ENCODE measurements at regions of chr6 and their contacts with region 1.

Region 1: GRCh38 chr6:53171605-53172446 is 23.2 kb upstream of the GCM1 start:
- DNase-seq: peak; percentile 80
- H3K4me3 ChIP-seq: peak overlapping the region in 1 of 2 experiments; percentile 50; a peak in 1 of 4 replicates
- H3K27ac ChIP-seq: no peak overlapping the region
- H3K4me1 ChIP-seq: no peaks in the 10 kb centered on the region; a peak in 1 of 4 replicates
- H3K27me3 ChIP-seq: no peaks in the 10 kb centered on the region
- CTCF ChIP-seq: peak; percentile 100
- EP300 ChIP-seq: no peak
- RAD21 ChIP-seq: peak; percentile 100

Region 2: GRCh38 chr6:52964318-52964717 is 207.5 kb before region 1 on chr6:
- CTCF ChIA-PET with region 1: no interaction called
- POLR2A ChIA-PET with region 1: no interaction called
- DNase-seq: no peak
- H3K4me3 ChIP-seq: no peak overlapping the region
- H3K27ac ChIP-seq: no peak overlapping the region
- H3K4me1 ChIP-seq: no peaks in the 10 kb centered on the region
- H3K27me3 ChIP-seq: no peaks in the 10 kb centered on the region
- CTCF ChIP-seq: no peak
- EP300 ChIP-seq: no peak
- RAD21 ChIP-seq: no peak

Region 3: DNA sequence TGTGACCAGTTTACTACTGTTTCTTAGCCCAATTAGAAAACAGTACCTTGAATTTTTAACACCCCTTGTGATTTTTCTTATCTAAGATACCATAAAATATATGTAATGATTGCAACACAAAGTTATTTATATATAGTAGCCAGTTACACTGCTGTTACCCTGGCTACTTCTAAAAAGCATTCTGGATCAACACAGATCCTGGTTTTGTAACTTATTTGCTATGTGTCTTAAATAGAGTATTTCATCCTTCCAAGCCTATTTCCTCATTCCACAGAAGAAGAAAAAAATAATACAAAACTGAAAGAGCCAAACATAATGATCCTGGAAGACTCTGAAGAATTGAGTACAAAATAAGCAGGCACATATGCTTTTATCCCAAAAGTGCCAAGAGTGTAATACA is 157.8 kb before region 1 on chr6:
- CTCF ChIA-PET with region 1: no interaction called
- POLR2A ChIA-PET with region 1: no interaction called
- DNase-seq: no peak
- H3K4me3 ChIP-seq: no peak overlapping the region
- H3K27ac ChIP-seq: no peak overlapping the region; a peak in 1 of 4 replicates
- H3K4me1 ChIP-seq: no peaks in the 10 kb centered on the region
- H3K27me3 ChIP-seq: no peaks in the 10 kb centered on the region
- CTCF ChIP-seq: no peak
- EP300 ChIP-seq: no peak
- RAD21 ChIP-seq: no peak

Region 4: DNA sequence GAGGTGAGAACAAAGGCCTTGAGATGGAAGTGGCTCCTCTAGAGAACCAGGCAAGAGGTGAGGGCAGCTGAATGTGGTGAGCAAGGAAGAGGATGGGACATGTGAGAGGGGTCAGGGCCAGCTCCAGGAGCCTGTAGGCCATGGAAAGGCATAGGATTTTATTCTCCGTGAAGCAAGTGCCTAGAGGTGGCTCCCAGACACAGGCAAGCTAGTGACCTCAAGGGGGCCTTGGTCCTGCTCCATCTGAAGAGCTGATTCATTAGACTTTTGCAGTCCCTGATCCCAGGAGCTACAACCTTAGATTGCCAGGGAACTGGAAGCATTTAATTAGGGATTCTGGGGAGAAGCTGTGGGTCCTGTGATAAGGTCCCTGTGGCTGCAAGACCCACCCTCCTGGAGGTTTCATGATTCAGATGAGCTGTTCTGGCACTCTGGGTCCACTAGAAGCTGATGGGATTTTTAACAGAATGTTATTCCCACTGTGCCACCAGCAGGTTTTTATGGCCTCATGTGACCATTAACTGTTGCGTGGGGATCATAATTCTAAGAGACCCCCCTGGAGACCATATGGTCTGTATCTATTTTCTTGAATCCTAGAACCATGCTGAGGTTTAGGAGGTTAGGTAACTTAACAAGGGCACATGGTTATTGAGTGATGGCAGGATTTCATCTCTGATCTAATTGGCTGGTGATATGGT is 86.4 kb after region 1 on chr6:
- CTCF ChIA-PET with region 1: interaction called, 13 read pairs
- POLR2A ChIA-PET with region 1: no interaction called
- DNase-seq: no peak
- H3K4me3 ChIP-seq: no peak overlapping the region
- H3K27ac ChIP-seq: no peak overlapping the region; a peak in 1 of 4 replicates
- H3K4me1 ChIP-seq: peaks cover 0 to 3% of the 10 kb centered on the region in 2 experiments; a peak in 1 of 4 replicates
- H3K27me3 ChIP-seq: no peaks in the 10 kb centered on the region
- CTCF ChIP-seq: no peak
- EP300 ChIP-seq: no peak
- RAD21 ChIP-seq: no peak

Region 5: DNA sequence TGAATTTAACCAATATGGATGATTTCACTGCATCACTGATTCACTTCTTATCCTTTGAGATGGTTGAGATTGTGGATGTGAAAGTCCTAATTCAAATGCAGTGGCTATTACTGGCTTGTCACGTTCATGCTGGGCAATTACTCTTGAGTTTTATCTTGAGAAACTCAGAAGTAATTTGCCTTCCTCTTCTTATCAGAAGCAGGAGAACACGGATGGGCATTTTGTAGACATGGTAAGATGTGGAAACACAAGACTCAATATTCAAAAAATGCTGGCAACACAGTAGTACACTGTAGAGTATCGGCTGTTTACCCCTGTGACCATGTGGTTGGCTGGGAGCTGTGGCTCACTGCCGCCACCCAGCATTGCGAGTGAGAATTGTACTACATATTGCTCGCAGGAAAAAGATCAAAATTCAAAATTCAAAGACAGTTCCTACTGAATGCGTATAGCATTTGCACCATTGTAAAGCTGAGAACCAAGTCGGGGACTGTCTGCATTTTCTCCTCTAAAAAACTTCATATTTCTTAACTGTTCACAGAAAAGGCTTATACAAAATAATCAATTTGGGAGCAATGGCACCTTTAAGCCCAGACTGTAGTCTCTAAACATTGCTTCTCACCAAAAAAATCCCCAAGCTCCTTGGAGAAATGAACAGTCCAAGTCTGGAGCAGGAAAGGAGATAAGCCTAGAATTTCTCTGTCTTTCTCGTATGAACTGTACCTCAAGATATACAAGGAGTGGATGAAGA is 238.9 kb after region 1 on chr6:
- CTCF ChIA-PET with region 1: interaction called, 40 read pairs
- POLR2A ChIA-PET with region 1: no interaction called
- DNase-seq: peak; percentile 49
- H3K4me3 ChIP-seq: no peak overlapping the region
- H3K27ac ChIP-seq: no peak overlapping the region
- H3K4me1 ChIP-seq: peaks cover 0 to 2% of the 10 kb centered on the region in 2 experiments; a peak in 1 of 4 replicates
- H3K27me3 ChIP-seq: no peaks in the 10 kb centered on the region; the same call in 1 of the 2 replicates
- CTCF ChIP-seq: peak; percentile 64
- EP300 ChIP-seq: no peak
- RAD21 ChIP-seq: peak; percentile 83

Region 6: DNA sequence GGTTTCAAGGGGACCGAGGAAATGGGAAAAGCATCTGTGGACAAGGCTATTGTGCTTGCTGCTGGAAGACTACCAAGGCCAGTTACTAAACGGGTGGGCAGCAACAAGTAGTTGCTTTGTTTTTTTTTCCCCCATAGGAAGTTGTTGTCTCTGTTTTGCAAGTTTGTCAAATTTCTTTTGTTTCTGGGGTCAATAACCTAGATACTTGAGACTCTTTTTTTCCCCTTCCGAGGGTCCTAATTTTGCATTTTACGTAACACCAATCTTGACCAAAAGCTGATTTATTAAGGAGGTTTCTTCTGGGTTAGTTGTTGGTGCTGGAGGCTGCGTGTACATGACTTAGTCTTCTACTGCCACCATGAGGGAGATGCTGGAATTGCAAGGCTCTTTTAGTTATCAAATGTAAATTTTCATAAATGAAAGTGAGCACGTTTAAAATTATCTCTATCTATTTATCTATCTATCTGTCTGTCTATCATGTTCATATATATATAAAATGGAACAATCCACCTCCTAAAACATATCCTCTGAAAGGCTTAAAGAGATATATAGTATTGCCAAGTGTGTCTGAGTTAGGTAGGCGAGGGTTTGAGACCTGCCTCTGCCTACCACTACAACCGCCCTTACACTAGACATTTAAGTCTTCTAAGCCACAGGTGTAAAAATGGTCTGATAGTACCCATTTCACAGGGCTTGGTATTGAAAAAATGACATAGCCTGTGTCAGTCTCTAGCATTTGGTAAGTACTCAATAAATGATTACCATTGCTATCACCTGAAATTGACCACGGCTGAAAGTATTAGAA is 312.9 kb after region 1 on chr6:
- CTCF ChIA-PET with region 1: interaction called, 90 read pairs
- POLR2A ChIA-PET with region 1: no interaction called
- DNase-seq: peak; percentile 27
- H3K4me3 ChIP-seq: peak overlapping the region in 1 of 2 experiments; percentile 19; a peak in 1 of 4 replicates
- H3K27ac ChIP-seq: no peak overlapping the region
- H3K4me1 ChIP-seq: peaks cover 0 to 8% of the 10 kb centered on the region in 2 experiments; a peak in 2 of 4 replicates
- H3K27me3 ChIP-seq: peaks cover 17% of the 10 kb centered on the region
- CTCF ChIP-seq: peak; percentile 99
- EP300 ChIP-seq: no peak
- RAD21 ChIP-seq: peak; percentile 98

Region 7: DNA sequence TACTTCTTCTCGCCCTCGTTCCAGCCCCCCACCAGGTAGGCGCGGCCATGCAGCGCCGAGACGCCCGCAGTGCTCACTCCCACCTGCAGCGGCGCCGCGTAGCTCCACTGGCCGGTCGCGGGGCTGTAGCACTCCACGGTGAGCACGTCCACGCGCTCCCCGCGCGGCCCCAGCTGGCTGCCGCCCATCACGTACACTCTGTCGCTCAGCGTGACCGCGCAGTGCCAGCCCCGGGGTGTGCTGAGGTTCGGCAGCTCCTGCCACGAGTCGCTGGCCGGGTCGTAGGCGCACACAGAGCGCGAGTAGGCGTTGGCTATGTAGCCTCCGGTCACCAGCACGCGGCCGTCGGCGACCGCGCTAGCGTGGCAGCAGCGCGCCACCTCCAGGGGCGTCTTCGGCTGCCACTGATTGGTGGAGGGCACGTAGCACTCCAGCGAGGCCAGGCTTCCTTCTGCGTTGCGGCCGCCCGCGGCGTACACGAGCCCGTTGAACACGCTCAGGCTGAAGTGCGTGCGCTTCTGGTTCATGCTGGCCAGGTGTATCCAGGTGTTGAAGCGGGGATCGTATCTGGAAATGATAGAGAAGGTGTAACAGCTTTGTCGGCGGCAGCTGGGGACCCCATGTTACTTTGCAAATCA is 480.1 kb after region 1 on chr6:
- CTCF ChIA-PET with region 1: interaction called, 10 read pairs
- POLR2A ChIA-PET with region 1: no interaction called
- DNase-seq: peak; percentile 80
- H3K4me3 ChIP-seq: peak overlapping the region; percentile 52 to 56
- H3K27ac ChIP-seq: no peak overlapping the region
- H3K4me1 ChIP-seq: peaks cover 0 to 13% of the 10 kb centered on the region in 2 experiments; a peak in 1 of 4 replicates
- H3K27me3 ChIP-seq: peaks cover 17% of the 10 kb centered on the region
- CTCF ChIP-seq: no peak
- EP300 ChIP-seq: no peak
- RAD21 ChIP-seq: no peak